ENCODE measurements at regions of chr17 and their contacts with region 1.

Region 1: DNA sequence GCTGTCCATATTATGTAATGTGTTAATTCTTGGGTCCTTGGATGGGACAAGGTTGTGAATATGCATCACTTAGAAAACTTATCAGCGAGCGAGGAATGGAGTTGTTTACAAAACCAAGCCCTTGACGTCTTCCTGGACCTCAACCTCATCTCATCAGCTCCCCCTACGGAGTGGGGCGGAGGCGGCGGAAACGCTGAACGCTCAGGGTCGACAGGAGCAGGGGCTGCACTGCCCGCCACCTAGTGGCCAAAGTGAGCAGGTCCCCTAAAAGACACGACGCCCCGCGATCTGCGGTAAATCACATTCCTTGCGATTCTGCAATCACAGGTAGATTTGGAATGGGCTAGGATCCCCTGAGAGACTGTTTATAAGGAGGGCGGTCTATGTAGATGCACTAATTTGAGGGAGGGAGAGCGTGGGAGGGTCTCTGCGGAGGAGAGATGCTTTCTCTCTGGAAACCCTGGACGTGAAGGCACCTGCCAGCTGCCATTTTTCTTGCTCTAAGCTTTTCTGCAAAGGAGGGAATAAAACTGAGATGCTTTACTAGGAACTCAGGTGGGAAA is 5.4 kb upstream of the ICAM2 start:
- DNase-seq: peak; percentile 55
- ATAC-seq: peak; percentile 90
- H3K4me3 ChIP-seq: no peak overlapping the region; the same call in 1 of the 2 replicates
- H3K27ac ChIP-seq: 0 out of 2 replicates have a peak overlapping the region, but pooled peaks have one; percentile 7
- H3K4me1 ChIP-seq: peaks cover 11% of the 10 kb centered on the region
- H3K27me3 ChIP-seq: no peaks in the 10 kb centered on the region
- CTCF ChIP-seq: peak; percentile 94 to 100 (median 97)
- EP300 ChIP-seq: no peak
- POLR2A ChIP-seq: no peak
- RAD21 ChIP-seq: peak; percentile 75

Region 2: GRCh38 chr17:63911657-63912426 is 114.0 kb before region 1 on chr17:
- CTCF ChIA-PET with region 1: interaction called, 351 read pairs
- POLR2A ChIA-PET with region 1: interaction called, 4 read pairs
- RAD21 ChIA-PET with region 1: interaction called, 19 read pairs
- SMC1A ChIA-PET with region 1: interaction called, 88 read pairs
- in situ Hi-C with region 1: no loop called
- intact Hi-C with region 1: no loop called
- DNase-seq: no peak
- ATAC-seq: peak; percentile 78
- H3K4me3 ChIP-seq: no peak overlapping the region
- H3K27ac ChIP-seq: no peak overlapping the region
- H3K4me1 ChIP-seq: peaks cover 5% of the 10 kb centered on the region
- H3K27me3 ChIP-seq: peaks cover 0 to 2% of the 10 kb centered on the region in 2 experiments; a peak in 2 of 4 replicates
- CTCF ChIP-seq: peak; percentile 58 to 79 (median 66)
- EP300 ChIP-seq: no peak
- POLR2A ChIP-seq: no peak
- RAD21 ChIP-seq: peak; percentile 68

Region 3: DNA sequence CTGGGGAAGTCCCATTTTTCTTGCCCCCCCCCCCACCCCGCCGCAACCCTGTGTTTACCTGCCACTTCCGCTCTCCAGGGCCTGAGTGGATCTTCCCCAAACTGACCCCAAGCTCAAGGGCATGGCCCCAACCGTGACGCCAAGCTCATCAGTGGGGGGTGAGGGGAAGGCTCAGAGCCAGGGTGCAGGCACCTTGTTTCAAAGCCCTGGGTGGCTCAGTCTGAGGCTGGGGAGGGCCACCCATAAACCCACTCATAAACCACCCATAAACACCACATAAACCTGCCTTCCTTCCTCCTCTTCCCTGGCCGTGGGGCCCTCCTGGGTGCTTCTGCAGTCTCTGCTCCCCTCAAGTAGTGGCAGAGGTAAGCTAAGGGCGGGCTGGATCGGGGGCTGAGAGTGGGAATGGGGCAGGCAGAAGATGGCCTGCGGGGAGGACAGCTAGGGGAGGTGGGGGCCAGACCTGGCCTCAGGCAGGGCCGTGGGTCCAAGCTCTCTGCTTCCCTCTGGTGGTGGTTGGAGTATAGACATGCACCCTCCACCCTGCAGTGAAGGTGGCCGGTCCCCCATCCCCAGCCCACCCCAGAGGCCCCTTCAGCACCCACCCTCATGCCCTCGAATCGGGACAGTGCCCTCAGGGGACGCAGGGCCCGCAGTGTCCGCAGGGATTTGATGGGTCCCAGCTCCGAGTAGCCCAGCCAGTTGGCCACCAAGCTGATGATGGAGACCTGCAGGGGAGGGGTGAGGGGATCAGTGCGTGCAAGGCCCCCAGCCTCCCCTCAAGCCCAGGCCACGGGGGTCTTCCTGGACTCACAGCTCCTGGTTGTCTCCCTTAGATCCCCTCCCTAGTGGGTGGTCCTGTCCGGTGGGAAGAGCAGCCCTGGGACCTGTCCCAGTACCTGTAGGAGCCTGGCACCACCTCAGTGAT is 79.1 kb before region 1 on chr17:
- CTCF ChIA-PET with region 1: interaction called, 95 read pairs
- POLR2A ChIA-PET with region 1: interaction called, 7 read pairs
- RAD21 ChIA-PET with region 1: interaction called, 29 read pairs
- SMC1A ChIA-PET with region 1: interaction called, 21 read pairs
- in situ Hi-C with region 1: no loop called
- intact Hi-C with region 1: no loop called
- DNase-seq: no peak
- ATAC-seq: peak; percentile 92
- H3K4me3 ChIP-seq: peak overlapping the region; percentile 39; the same call in 1 of the 2 replicates
- H3K27ac ChIP-seq: peak overlapping the region; percentile 86
- H3K4me1 ChIP-seq: peaks cover 18% of the 10 kb centered on the region
- H3K27me3 ChIP-seq: no peaks in the 10 kb centered on the region
- CTCF ChIP-seq: peak; percentile 65 to 85 (median 78)
- EP300 ChIP-seq: no peak
- POLR2A ChIP-seq: 0 out of 2 replicates have a peak, but pooled peaks have one; percentile 49
- RAD21 ChIP-seq: peak; percentile 65

Region 4: DNA sequence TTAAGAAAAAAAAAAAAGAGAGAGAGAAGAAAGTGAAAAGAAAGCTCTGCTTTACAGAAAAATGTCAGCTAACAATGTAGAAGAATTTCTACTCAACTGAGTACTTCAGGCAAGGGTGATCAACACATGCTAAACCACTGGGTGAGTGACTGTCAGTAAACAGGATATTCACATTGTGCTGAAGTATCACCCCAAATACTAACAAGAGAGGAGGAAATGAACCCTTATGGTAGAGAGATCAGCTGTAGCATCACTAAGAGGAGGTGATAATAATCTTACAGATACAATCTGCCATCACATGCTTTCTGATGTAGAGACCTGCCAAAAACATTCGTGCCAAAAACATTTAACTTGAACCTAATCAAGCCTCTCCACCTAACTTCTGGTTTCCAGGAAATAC is 25.3 kb after region 1 on chr17:
- CTCF ChIA-PET with region 1: interaction called, 75 read pairs
- POLR2A ChIA-PET with region 1: interaction called, 4 read pairs
- RAD21 ChIA-PET with region 1: interaction called, 11 read pairs
- SMC1A ChIA-PET with region 1: interaction called, 33 read pairs
- in situ Hi-C with region 1: no loop called
- intact Hi-C with region 1: no loop called
- DNase-seq: no peak
- ATAC-seq: no peak
- H3K4me3 ChIP-seq: no peak overlapping the region
- H3K27ac ChIP-seq: no peak overlapping the region
- H3K4me1 ChIP-seq: peaks cover 5% of the 10 kb centered on the region
- H3K27me3 ChIP-seq: no peaks in the 10 kb centered on the region
- CTCF ChIP-seq: no peak
- EP300 ChIP-seq: no peak
- POLR2A ChIP-seq: no peak
- RAD21 ChIP-seq: no peak

Region 5: GRCh38 chr17:64073771-64074703 is 48.2 kb after region 1 on chr17:
- CTCF ChIA-PET with region 1: interaction called, 58 read pairs
- POLR2A ChIA-PET with region 1: interaction called, 8 read pairs
- RAD21 ChIA-PET with region 1: interaction called, 16 read pairs
- SMC1A ChIA-PET with region 1: interaction called, 32 read pairs
- in situ Hi-C with region 1: no loop called
- intact Hi-C with region 1: no loop called
- DNase-seq: peak; percentile 62
- ATAC-seq: peak; percentile 96
- H3K4me3 ChIP-seq: peak overlapping the region; percentile 32; the same call in 1 of the 2 replicates
- H3K27ac ChIP-seq: peak overlapping the region; percentile 72
- H3K4me1 ChIP-seq: peaks cover 46% of the 10 kb centered on the region
- H3K27me3 ChIP-seq: no peaks in the 10 kb centered on the region
- CTCF ChIP-seq: no peak
- EP300 ChIP-seq: peak; percentile 66 to 91; a peak in 3 of 4 replicates
- POLR2A ChIP-seq: no peak
- RAD21 ChIP-seq: no peak; the same call in 1 of the 2 replicates

Region 6: DNA sequence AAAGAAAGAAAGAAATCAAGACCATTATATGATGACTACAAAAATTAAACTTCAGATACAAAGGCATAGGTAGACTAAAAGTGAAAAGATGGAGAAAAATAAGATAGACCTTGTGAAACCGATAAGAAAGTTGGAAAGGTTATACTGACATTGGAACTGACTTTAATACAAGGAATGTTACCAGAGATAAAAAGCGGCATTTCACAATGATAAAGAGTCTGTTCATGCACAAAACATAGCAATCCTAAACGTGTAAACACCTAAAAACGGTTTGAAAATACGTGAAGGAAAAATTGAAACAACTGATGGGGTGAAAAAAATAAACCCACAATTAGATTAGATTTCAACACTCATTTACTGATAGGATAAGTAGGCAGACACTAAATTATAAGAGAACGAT is 113.7 kb after region 1 on chr17:
- CTCF ChIA-PET with region 1: interaction called, 915 read pairs
- POLR2A ChIA-PET with region 1: interaction called, 86 read pairs
- RAD21 ChIA-PET with region 1: interaction called, 507 read pairs
- SMC1A ChIA-PET with region 1: interaction called, 570 read pairs
- in situ Hi-C with region 1: loop called (anchors 5 kb)
- intact Hi-C with region 1: no loop called
- DNase-seq: no peak
- ATAC-seq: no peak
- H3K4me3 ChIP-seq: no peak overlapping the region
- H3K27ac ChIP-seq: no peak overlapping the region
- H3K4me1 ChIP-seq: no peaks in the 10 kb centered on the region
- H3K27me3 ChIP-seq: no peaks in the 10 kb centered on the region
- CTCF ChIP-seq: no peak
- EP300 ChIP-seq: no peak
- POLR2A ChIP-seq: no peak
- RAD21 ChIP-seq: no peak